GM10248 (cell line): ENCODE measurements at regions of chr3 and their contacts with region 1.

Region 1: GRCh38 chr3:4493014-4493940 is at the start of gene ITPR1:
- DNase-seq: peak; percentile 97
- CTCF ChIP-seq: no peak

Region 2: GRCh38 chr3:3196148-3196861 is 1297.0 kb before region 1 on chr3:
- CTCF ChIA-PET with region 1: no interaction called
- POLR2A ChIA-PET with region 1: no interaction called
- DNase-seq: no peak
- CTCF ChIP-seq: peak; percentile 24

Region 3: GRCh38 chr3:3851621-3852323 is 641.5 kb before region 1 on chr3:
- CTCF ChIA-PET with region 1: no interaction called
- POLR2A ChIA-PET with region 1: interaction called, 11 read pairs
- DNase-seq: peak; percentile 29
- CTCF ChIP-seq: no peak

Region 4: DNA sequence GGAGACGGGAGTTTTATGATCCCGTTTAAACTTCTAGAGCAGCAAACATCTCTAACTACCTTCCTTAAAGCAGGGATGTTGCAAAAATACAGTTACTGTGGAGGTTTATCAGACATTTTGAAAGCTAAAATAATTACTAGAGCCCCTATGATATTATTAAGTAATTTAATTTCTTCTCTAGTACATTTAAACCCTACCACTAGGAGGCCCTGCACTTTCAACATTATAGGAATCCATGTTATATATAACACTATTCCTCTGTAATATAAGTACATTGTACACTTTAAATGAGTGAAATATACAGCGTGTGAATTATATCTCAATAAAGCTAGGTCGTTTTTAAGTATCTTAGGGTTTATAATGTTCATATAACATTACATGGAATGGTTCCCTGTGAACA is 178.6 kb before region 1 on chr3:
- CTCF ChIA-PET with region 1: no interaction called
- POLR2A ChIA-PET with region 1: no interaction called
- DNase-seq: no peak
- CTCF ChIP-seq: no peak

Region 5: GRCh38 chr3:4350789-4351163 is 142.5 kb before region 1 on chr3:
- CTCF ChIA-PET with region 1: interaction called, 14 read pairs
- POLR2A ChIA-PET with region 1: no interaction called
- DNase-seq: peak; percentile 72
- CTCF ChIP-seq: peak; percentile 63

Region 6: GRCh38 chr3:4454142-4454541 is 39.1 kb before region 1 on chr3:
- CTCF ChIA-PET with region 1: no interaction called
- POLR2A ChIA-PET with region 1: no interaction called
- DNase-seq: no peak
- CTCF ChIP-seq: no peak

Region 7: GRCh38 chr3:4466741-4467521 is 26.3 kb before region 1 on chr3 and contains the start of gene SUMF1:
- CTCF ChIA-PET with region 1: interaction called, 5 read pairs
- POLR2A ChIA-PET with region 1: interaction called, 12 read pairs
- DNase-seq: peak; percentile 93
- CTCF ChIP-seq: no peak

Region 8: GRCh38 chr3:4474683-4475490 is 18.4 kb before region 1 on chr3:
- CTCF ChIA-PET with region 1: interaction called, 7 read pairs
- POLR2A ChIA-PET with region 1: interaction called, 17 read pairs
- DNase-seq: no peak
- CTCF ChIP-seq: no peak

Region 9: DNA sequence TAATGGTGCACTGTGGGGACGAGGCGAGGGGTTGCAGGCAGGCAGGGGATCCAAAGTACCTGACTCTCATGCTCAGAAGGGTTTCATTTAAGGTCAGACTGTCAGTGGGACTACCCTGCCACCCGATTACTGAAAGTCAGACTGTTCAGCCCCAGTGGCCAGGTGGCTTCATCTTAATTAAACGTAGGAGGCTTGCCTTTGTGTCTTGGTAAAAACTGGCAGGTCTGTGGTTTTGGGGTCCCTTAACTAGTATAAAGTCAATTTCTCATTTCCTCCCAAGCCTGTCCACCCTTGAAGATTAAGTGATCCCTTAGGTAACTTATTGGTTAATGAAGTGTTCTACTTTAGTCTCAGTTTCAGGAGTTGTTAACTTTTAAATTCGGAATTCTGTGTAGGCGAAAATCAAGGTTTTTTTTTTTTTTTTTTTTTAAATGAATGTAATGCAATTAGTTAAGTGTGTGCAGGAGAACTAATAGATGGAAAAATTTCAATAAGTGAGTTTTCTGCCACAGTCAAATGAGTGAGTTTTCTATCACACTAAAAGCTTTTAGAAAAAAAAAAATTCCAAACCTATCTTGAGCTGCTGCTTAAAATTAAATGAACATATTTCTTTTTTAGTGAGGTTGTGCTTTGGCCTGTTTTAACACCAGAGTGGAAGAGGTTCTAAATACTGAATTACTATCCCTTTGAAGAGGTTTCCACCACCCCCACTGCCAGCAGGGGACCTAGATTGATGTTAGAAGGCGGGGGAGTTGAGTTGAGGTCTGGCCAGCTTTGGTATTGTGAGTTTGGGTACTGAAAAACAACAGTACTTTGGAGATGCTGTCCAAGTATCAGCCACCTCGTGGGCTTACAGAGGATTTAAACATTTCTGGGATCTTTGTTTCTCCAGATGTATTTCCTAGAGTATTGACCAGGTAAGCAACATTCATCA is 15.0 kb after region 1 on chr3:
- CTCF ChIA-PET with region 1: interaction called, 8 read pairs
- POLR2A ChIA-PET with region 1: interaction called, 14 read pairs
- DNase-seq: peak; percentile 52
- CTCF ChIP-seq: no peak

Region 10: DNA sequence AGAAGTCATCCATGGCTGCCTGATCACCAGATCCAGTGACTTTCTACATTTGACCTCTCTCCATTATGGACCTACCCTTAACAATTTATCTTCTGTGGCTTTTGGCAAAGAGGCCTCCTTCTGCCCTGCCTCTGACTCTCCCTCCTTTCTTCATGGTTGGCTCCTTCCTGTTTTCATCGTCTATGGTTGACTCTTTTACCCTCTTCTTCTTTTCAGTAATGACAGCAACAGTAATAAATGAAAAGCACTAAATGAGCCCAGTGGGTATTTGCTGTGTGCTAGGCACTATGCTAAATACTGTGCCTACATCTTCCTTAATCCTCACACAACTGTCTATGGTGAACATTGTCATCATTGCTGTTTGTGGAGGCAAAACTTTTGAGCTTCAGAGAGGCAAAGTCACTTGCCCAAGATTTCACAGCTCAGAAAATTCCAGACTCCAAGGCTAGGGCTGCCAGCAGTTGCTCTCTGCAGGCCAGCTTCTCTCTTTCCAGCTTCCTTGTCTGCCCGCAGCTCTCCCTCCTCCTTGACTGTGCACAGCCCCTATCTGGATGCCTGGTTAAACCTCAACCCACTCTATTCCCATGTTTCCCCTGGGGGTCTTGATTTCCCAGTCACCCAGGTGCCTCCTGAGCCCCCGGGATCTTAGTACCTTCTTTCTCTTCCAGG is 24.5 kb after region 1 on chr3:
- CTCF ChIA-PET with region 1: interaction called, 3 read pairs
- POLR2A ChIA-PET with region 1: interaction called, 17 read pairs
- DNase-seq: no peak
- CTCF ChIP-seq: no peak